Activated CD4-positive, alpha-beta memory T cell treated with anti-CD3 and anti-CD28 coated beads for 36 hours (primary cell): ENCODE measurements at regions of chr4 and their contacts with region 1.

Region 1: GRCh38 chr4:139315221-139315675 is 13.0 kb upstream of the NDUFC1 start:
- DNase-seq: no peak
- H3K4me3 Mint-ChIP-seq: no peak overlapping the region
- H3K27ac Mint-ChIP-seq: peak overlapping the region; percentile 77
- H3K4me1 Mint-ChIP-seq: peaks cover 72% of the 10 kb centered on the region
- H3K27me3 Mint-ChIP-seq: no peaks in the 10 kb centered on the region

Region 2: DNA sequence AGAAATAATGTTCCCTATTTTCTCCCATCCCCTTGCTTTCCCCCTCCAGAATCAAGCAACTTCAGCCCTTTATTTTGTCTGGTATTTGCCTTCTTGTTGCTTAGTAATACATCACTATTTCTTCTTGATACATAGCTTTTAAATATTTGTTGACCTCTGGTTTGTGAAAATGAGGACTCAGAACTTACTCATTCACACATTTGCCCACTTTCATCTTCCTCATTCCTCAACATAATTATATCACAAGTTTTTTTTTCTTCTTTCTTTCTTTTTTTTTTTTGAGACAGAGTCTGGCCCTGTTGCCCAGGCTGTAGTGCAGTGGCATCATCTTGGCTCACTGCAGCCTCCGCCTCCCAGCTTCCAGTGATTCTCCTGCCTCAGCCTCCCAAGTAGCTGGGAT is 15.9 kb after region 1 on chr4:
- CTCF ChIA-PET with region 1: no interaction called
- POLR2A ChIA-PET with region 1: no interaction called
- intact Hi-C with region 1: loop called (anchors 2 kb)
- DNase-seq: no peak
- H3K4me3 Mint-ChIP-seq: no peak overlapping the region
- H3K27ac Mint-ChIP-seq: no peak overlapping the region
- H3K4me1 Mint-ChIP-seq: peaks cover 45% of the 10 kb centered on the region
- H3K27me3 Mint-ChIP-seq: no peaks in the 10 kb centered on the region